ENCODE measurements at regions of chr12 and their contacts with region 1.

Region 1: GRCh38 chr12:53065975-53066931 is 12.9 kb downstream of the SPRYD3 start:
- DNase-seq: peak; percentile 78
- H3K4me3 Mint-ChIP-seq: no peak overlapping the region
- H3K27ac Mint-ChIP-seq: no peak overlapping the region
- H3K4me1 Mint-ChIP-seq: peaks cover 8% of the 10 kb centered on the region
- H3K27me3 Mint-ChIP-seq: no peaks in the 10 kb centered on the region

Region 2: GRCh38 chr12:53054112-53054833 is 12.0 kb before region 1 on chr12:
- CTCF ChIA-PET with region 1: interaction called, 32 read pairs
- intact Hi-C with region 1: no loop called
- DNase-seq: peak; percentile 95
- H3K4me3 Mint-ChIP-seq: peak overlapping the region; percentile 95
- H3K27ac Mint-ChIP-seq: peak overlapping the region; percentile 83
- H3K4me1 Mint-ChIP-seq: peaks cover 12% of the 10 kb centered on the region
- H3K27me3 Mint-ChIP-seq: no peaks in the 10 kb centered on the region

Region 3: DNA sequence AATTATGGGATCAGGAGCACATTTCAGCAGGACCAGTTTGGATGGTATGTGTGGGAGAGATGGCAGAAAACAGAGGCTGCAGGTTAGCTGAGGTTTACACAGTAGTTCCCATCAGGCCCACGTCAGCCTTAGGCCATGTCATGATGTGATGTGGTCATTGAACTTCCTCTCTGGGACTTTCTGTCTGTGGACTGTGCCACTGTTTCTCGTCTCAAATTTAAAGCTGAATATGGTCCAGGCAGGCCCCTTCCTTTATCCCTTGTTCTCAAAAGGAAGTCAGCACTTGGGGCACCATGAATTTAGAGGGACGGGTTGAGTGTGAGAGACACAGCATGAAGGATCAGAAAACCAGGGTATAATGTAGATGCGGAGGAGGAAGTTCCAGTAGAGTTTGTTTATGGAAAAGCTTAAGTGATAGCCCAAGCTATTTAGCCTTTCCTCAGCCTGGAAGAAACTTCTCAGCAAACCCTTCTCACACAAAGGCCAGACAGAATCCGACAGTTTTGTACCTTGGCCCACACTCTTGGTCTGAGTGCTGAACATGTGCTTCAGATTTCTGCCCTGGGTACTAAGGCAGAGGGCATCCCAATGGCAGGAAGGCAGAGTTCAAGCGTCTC is 27.6 kb after region 1 on chr12:
- CTCF ChIA-PET with region 1: interaction called, 360 read pairs
- intact Hi-C with region 1: loop called (anchors 1 kb)
- DNase-seq: no peak
- H3K4me3 Mint-ChIP-seq: no peak overlapping the region
- H3K27ac Mint-ChIP-seq: no peak overlapping the region
- H3K4me1 Mint-ChIP-seq: peaks cover 16% of the 10 kb centered on the region
- H3K27me3 Mint-ChIP-seq: peaks cover 6% of the 10 kb centered on the region

Region 4: DNA sequence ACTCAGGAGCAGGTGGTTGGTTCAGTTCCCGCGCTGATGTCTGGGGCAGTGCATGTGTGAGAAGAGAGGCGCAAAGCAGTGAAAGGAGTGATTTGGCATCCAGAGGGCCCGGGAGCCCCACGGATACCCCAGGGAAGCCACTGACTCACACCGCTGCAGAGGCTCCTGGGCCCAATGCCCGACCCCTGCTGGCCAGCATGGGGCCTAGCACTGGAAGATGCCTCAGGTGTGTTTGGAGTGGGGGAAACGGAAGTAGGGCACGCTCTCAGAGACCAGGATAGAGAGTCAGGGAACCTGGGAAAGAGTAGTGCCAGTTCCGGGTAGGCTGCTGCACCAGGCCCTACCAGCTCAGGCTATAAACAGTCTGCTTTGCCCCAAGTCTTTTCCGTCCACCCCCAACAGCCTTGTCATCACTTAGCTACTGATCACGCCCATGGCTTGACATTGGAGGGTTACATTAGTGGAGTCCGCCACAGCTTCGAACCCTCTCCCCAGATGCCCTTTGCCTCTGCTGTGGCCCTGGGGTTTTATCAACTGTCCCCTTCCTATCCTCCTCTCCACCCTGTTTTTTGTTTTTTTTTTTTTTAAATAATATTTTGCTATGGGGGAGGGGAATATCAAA is 124.0 kb after region 1 on chr12:
- CTCF ChIA-PET with region 1: interaction called, 13 read pairs
- intact Hi-C with region 1: loop called (anchors 5 kb)
- DNase-seq: peak; percentile 61
- H3K4me3 Mint-ChIP-seq: no peak overlapping the region
- H3K27ac Mint-ChIP-seq: peak overlapping the region; percentile 32
- H3K4me1 Mint-ChIP-seq: peaks cover 13% of the 10 kb centered on the region
- H3K27me3 Mint-ChIP-seq: no peaks in the 10 kb centered on the region

Region 5: GRCh38 chr12:53344824-53345485 is 278.7 kb after region 1 on chr12:
- CTCF ChIA-PET with region 1: interaction called, 10 read pairs
- intact Hi-C with region 1: no loop called
- DNase-seq: peak; percentile 86
- H3K4me3 Mint-ChIP-seq: peak overlapping the region; percentile 91
- H3K27ac Mint-ChIP-seq: no peak overlapping the region
- H3K4me1 Mint-ChIP-seq: peaks cover 9% of the 10 kb centered on the region
- H3K27me3 Mint-ChIP-seq: no peaks in the 10 kb centered on the region